Tibial artery (tissue), 4 donors: ENCODE measurements at regions of chr7 and their contacts with region 1.

Region 1: GRCh38 chr7:44196450-44196872 is 4.3 kb upstream of the YKT6 start:
- DNase-seq: no peak
- H3K4me3 ChIP-seq: no peak overlapping the region
- H3K27ac ChIP-seq: no peak overlapping the region
- H3K4me1 ChIP-seq: peaks cover 0 to 2% (median 1%) of the 10 kb centered on the region in 4 donors
- H3K27me3 ChIP-seq: peaks cover 0 to 15% of the 10 kb centered on the region in 2 donors
- CTCF ChIP-seq: peak; percentile 61 to 69

Region 2: DNA sequence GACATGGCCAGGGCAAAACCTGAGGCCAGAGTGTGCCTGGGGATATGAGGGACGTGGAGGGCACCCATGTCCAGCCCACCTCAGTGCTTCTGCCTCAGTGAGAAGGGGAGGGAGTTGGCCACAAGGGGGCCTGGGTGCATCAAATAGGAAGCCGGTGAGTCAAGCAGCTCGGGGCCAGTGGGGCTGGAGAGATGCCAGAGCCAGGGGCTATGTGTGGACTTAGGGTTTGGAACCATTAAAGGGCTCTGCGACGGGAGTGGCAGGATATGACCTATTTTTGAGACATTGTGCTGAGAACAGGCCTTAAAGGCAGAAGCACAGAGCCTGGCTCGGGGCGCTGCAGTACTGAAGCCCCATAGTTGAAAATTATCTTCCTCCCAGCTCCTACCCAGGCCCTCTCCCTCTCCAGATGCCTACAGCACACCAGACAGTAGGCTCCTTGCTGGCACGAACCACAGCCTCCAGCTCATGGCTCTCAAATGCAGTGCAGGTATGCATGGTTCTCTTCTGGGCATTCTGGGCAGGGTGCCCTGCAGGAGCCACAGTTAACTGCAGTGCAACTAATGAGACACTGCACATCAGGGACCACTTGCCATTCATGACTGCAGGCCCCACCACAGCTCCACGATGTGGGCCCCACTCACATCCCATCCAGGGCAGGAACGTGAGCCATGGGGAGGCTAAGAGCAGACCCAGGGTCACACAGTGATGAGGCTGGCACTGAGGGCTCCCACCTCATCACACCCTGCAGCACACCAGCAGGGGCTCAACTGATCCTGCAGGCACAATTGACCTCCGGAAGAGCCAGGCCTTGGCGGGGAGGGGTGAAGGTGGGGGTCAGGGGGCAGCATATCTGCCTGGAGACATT is 123.9 kb before region 1 on chr7:
- intact Hi-C with region 1: loop called (anchors 5 kb)
- DNase-seq: peak; percentile 86 to 92
- H3K4me3 ChIP-seq: peak overlapping the region in 1 of 2 donors; percentile 15
- H3K27ac ChIP-seq: peak overlapping the region; percentile 64 to 82
- H3K4me1 ChIP-seq: peaks cover 4 to 33% (median 26%) of the 10 kb centered on the region in 4 donors
- H3K27me3 ChIP-seq: no peaks in the 10 kb centered on the region
- CTCF ChIP-seq: peak; percentile 74 to 79